CD8-positive, alpha-beta T cell (primary cell): ENCODE measurements at regions of chr7 and their contacts with region 1.

Region 1: GRCh38 chr7:151439855-151440798 is at the start of gene CRYGN:
- DNase-seq: peak in 3 of 9 experiments; percentile 38 to 44 (median 39)
- ATAC-seq: peak; percentile 61
- H3K4me3 ChIP-seq: peak within 1 kb of the TSS; percentile 22 to 35
- H3K4me3 Mint-ChIP-seq: peak within 1 kb of the TSS; percentile 47
- H3K27ac ChIP-seq: peak within 1 kb of the TSS in 1 of 2 experiments; percentile 44
- H3K27ac Mint-ChIP-seq: peak within 1 kb of the TSS; percentile 81
- H3K4me1 ChIP-seq: peaks cover 33% of the 10 kb centered on the region
- H3K4me1 Mint-ChIP-seq: peaks cover 39% of the 10 kb centered on the region
- H3K27me3 ChIP-seq: peaks cover 0 to 2% of the 10 kb centered on the region in 2 experiments
- H3K27me3 Mint-ChIP-seq: no peaks in the 10 kb centered on the region
- CTCF ChIP-seq: no peak
- total RNA-seq, gene CRYGN: not detected

Region 2: GRCh38 chr7:151271699-151272355 is 168.3 kb before region 1 on chr7:
- CTCF ChIA-PET with region 1: no interaction called
- POLR2A ChIA-PET with region 1: no interaction called
- intact Hi-C with region 1: no loop called
- DNase-seq: peak in 3 of 9 experiments; percentile 37 to 65 (median 40)
- ATAC-seq: peak; percentile 59
- H3K4me3 ChIP-seq: no peak overlapping the region
- H3K4me3 Mint-ChIP-seq: peak overlapping the region; percentile 13
- H3K27ac ChIP-seq: peak overlapping the region in 1 of 2 experiments; percentile 40
- H3K27ac Mint-ChIP-seq: peak overlapping the region; percentile 75
- H3K4me1 ChIP-seq: peaks cover 26% of the 10 kb centered on the region
- H3K4me1 Mint-ChIP-seq: peaks cover 43% of the 10 kb centered on the region
- H3K27me3 ChIP-seq: no peaks in the 10 kb centered on the region
- H3K27me3 Mint-ChIP-seq: no peaks in the 10 kb centered on the region
- CTCF ChIP-seq: no peak

Region 3: DNA sequence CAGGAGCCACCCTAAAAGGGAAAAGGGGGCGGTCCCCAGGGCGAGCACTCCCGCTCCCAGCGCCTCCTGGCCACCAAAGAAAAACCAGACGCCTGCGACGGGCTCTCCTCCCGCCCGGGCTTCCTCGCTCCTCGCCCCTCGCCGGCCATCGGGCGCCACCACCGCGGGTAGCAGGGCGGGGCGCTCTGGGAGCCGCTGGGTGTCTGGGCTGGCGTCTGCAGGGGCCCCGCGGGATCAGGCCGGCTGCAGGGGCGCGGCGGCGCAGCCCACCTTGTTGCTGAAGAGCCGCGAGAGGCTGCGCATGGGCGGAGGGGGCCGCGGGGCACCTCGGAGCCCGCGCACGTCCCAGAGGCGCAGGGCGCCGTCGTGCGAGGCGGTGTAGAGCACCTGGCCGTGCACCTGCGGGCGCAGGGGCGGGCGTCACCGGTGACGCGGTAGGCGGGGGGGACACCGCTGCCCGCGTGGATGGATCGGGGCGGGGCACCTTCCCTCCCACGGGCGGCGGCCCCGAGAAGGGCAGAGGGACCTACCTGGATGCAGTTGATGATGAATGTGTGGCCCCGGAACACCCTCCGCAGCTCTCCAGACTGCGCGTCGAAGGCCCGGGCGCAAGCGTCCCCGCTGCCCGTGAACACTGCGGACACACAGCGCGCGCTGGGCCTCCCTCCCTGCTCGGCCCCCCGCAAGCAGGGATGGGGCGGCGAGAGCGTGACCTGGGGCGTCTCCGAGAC is 58.6 kb before region 1 on chr7:
- CTCF ChIA-PET with region 1: no interaction called
- POLR2A ChIA-PET with region 1: no interaction called
- intact Hi-C with region 1: loop called in 1 of 2 experiments (anchors 2 kb)
- DNase-seq: peak; percentile 15 to 86 (median 64)
- ATAC-seq: peak; percentile 85
- H3K4me3 ChIP-seq: peak overlapping the region; percentile 40 to 54
- H3K4me3 Mint-ChIP-seq: peak overlapping the region; percentile 78
- H3K27ac ChIP-seq: peak overlapping the region in 1 of 2 experiments; percentile 22
- H3K27ac Mint-ChIP-seq: peak overlapping the region; percentile 18
- H3K4me1 ChIP-seq: peaks cover 19% of the 10 kb centered on the region
- H3K4me1 Mint-ChIP-seq: peaks cover 12% of the 10 kb centered on the region
- H3K27me3 ChIP-seq: peaks cover 6 to 7% of the 10 kb centered on the region in 2 experiments
- H3K27me3 Mint-ChIP-seq: peaks cover 7% of the 10 kb centered on the region
- CTCF ChIP-seq: no peak

Region 4: GRCh38 chr7:151537818-151538561 is 97.9 kb after region 1 on chr7:
- CTCF ChIA-PET with region 1: no interaction called
- POLR2A ChIA-PET with region 1: no interaction called
- intact Hi-C with region 1: no loop called
- DNase-seq: no peak
- ATAC-seq: no peak
- H3K4me3 ChIP-seq: no peak overlapping the region
- H3K4me3 Mint-ChIP-seq: no peak overlapping the region
- H3K27ac ChIP-seq: no peak overlapping the region
- H3K27ac Mint-ChIP-seq: no peak overlapping the region
- H3K4me1 ChIP-seq: no peaks in the 10 kb centered on the region
- H3K4me1 Mint-ChIP-seq: peaks cover 8% of the 10 kb centered on the region
- H3K27me3 ChIP-seq: peaks cover 0 to 3% of the 10 kb centered on the region in 2 experiments
- H3K27me3 Mint-ChIP-seq: peaks cover 16% of the 10 kb centered on the region
- CTCF ChIP-seq: no peak